ENCODE measurements at regions of chr17 and their contacts with region 1.

Region 1: GRCh38 chr17:39813631-39814030 is 50.5 kb downstream of the IKZF3 start:
- DNase-seq: peak; percentile 64
- H3K4me3 Mint-ChIP-seq: no peak overlapping the region
- H3K27ac Mint-ChIP-seq: no peak overlapping the region
- H3K4me1 Mint-ChIP-seq: peaks cover 19% of the 10 kb centered on the region
- H3K27me3 Mint-ChIP-seq: no peaks in the 10 kb centered on the region
- CTCF ChIP-seq: no peak

Region 2: DNA sequence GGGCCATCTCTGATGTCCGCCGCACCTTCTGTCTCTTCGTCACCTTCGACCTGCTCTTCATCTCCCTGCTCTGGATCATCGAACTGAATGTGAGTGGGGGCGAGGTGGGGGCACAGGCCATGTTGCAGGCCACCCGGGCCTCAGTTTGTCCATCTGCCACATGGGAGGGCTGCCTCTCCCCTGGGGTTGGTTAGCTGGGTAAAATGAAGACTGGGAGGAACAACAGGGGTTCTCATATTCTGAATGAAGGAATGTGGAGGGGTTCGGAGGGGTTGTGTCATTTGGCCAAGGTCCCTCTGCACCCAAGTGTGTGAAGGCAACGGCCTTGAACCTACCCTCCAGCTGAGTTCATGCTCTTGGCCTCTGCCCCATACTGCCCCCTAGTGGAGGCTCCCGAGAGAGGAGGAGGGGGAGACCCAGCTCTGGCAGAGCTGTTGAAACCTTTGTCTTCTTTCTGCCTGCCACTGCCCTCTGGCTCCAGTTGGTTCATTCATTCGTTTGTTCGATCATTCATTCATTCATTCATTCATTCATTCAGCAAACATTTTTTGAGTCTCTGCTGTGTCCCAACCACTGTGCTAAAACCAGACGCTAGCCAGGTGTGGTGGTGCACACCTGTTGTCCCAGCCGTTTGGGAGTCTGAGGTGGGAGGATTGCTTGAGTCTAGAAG is 159.8 kb before region 1 on chr17:
- CTCF ChIA-PET with region 1: interaction called, 123 read pairs
- intact Hi-C with region 1: no loop called
- DNase-seq: peak; percentile 100
- H3K4me3 Mint-ChIP-seq: no peak overlapping the region
- H3K27ac Mint-ChIP-seq: no peak overlapping the region
- H3K4me1 Mint-ChIP-seq: peaks cover 23% of the 10 kb centered on the region
- H3K27me3 Mint-ChIP-seq: no peaks in the 10 kb centered on the region
- CTCF ChIP-seq: no peak

Region 3: DNA sequence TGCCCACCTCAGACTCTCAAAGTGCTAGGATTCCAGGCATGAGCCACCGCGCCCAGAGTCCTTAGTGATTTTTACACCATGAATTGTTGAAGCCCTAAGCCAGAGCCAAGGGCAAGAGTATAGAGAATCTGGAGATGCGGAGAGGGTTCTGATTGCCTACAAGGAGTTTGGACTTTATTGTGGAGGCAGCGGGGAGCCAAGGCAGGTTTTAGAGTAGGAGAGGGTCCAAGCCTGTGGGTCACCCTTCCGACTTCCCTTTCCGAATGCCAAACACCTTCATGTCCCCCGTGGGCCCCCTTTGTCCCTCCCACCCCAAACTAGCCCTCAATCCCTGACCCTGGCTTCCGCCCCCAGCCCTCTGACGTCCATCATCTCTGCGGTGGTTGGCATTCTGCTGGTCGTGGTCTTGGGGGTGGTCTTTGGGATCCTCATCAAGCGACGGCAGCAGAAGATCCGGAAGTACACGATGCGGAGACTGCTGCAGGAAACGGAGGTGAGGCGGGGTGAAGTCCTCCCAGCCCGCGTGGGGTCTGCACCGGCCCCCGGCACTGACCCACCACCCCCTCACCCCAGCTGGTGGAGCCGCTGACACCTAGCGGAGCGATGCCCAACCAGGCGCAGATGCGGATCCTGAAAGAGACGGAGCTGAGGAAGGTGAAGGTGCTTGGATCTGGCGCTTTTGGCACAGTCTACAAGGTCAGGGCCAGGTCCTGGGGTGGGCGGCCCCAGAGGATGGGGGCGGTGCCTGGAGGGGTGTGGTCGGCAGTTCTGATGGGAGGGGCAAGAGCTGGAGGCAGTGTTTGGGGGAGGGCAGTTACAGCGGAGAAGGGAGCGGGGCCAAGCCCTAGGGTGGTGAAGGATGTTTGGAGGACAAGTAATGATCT is 90.4 kb before region 1 on chr17:
- CTCF ChIA-PET with region 1: interaction called, 1,211 read pairs
- intact Hi-C with region 1: no loop called
- DNase-seq: peak; percentile 75
- H3K4me3 Mint-ChIP-seq: peak overlapping the region; percentile 0
- H3K27ac Mint-ChIP-seq: peak overlapping the region; percentile 28
- H3K4me1 Mint-ChIP-seq: peaks cover 38% of the 10 kb centered on the region
- H3K27me3 Mint-ChIP-seq: no peaks in the 10 kb centered on the region
- CTCF ChIP-seq: no peak

Region 4: DNA sequence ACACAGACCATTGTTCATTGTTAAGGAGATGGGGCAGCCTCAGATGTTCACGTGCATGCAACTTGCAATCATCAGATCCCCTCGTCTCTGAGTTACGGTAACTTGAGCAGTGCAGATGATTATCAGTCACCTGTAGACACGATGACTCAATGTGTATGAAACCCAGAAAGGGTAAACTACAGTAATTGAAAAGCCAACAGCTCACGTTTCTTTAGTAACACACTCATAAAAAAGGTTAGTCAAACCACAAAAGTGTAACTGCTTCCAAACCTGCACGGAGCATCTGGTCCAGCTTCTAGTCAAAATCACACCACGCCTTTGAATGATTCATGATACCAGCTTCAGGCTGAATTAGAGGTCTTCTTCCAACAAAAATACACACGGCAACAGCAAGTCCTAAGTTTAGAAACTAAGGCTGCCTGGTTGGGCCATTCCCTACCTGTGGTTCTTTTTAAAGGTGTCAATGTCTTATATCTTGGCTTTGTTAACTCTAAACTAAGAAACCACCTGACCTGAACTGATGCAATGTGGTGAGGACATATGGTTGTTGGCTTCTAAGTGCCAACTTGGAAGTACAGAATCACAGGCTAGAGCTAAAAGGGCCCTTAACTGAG is 43.5 kb before region 1 on chr17:
- CTCF ChIA-PET with region 1: interaction called, 1,211 read pairs
- intact Hi-C with region 1: loop called (anchors 1 kb)
- DNase-seq: peak; percentile 100
- H3K4me3 Mint-ChIP-seq: peak overlapping the region; percentile 10
- H3K27ac Mint-ChIP-seq: peak overlapping the region; percentile 60
- H3K4me1 Mint-ChIP-seq: peaks cover 72% of the 10 kb centered on the region
- H3K27me3 Mint-ChIP-seq: peaks cover 13% of the 10 kb centered on the region
- CTCF ChIP-seq: no peak

Region 5: DNA sequence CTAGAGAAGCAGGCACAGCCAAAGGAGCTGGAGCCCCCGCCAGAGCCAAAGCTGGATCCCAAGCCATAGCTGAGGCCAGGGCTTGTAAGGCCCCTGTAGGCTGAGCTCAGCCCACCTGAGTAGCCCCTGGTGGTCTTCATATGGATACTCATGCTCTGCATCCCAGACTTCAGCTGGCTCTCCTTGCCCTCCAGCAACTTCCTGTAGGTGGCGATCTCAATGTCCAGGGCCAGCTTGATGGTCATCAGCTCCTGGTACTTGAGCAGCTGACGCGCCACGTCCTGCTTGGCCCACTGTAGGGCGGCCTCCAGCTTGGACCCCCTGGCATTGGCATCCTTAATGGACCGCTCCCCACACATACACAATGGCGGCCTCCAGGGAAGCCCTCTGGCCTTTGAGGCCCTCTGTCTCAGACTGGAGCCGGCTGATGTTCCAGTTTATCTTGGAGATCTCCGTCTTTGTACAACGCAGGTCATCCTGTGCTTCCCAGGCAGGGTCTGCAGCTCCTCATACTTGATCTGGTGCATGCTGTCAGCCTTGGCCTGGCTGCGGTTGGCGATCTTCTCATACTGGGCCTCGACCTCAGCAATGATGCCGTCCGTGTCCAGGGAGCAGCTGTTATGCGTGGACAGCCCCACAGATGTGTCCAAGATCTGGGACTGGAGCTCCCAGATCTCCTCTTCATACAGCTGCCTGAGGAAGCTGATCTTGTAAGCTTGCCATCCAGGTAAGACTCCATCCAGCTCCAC is 21.6 kb after region 1 on chr17:
- CTCF ChIA-PET with region 1: interaction called, 1,210 read pairs
- intact Hi-C with region 1: no loop called
- DNase-seq: peak; percentile 79
- H3K4me3 Mint-ChIP-seq: no peak overlapping the region
- H3K27ac Mint-ChIP-seq: no peak overlapping the region
- H3K4me1 Mint-ChIP-seq: no peaks in the 10 kb centered on the region
- H3K27me3 Mint-ChIP-seq: no peaks in the 10 kb centered on the region
- CTCF ChIP-seq: no peak

Region 6: GRCh38 chr17:39927101-39927928 is 113.7 kb after region 1 on chr17 and contains the starts of genes LRRC3C and ORMDL3:
- CTCF ChIA-PET with region 1: interaction called, 39 read pairs
- intact Hi-C with region 1: loop called (anchors 1 kb)
- DNase-seq: no peak
- H3K4me3 Mint-ChIP-seq: peak within 1 kb of the TSS; percentile 74
- H3K27ac Mint-ChIP-seq: peak within 1 kb of the TSS; percentile 66
- H3K4me1 Mint-ChIP-seq: peaks cover 60% of the 10 kb centered on the region
- H3K27me3 Mint-ChIP-seq: no peaks in the 10 kb centered on the region
- CTCF ChIP-seq: no peak
- total RNA-seq, gene LRRC3C: not detected in 2 replicates
- total RNA-seq, gene ORMDL3: 1,738 and 1,968 TPM in 2 replicates

Region 7: GRCh38 chr17:40317880-40318829 is 504.5 kb after region 1 on chr17:
- CTCF ChIA-PET with region 1: interaction called, 11 read pairs
- intact Hi-C with region 1: no loop called
- DNase-seq: peak; percentile 100
- H3K4me3 Mint-ChIP-seq: peak overlapping the region; percentile 89
- H3K27ac Mint-ChIP-seq: peak overlapping the region; percentile 71
- H3K4me1 Mint-ChIP-seq: peaks cover 45% of the 10 kb centered on the region
- H3K27me3 Mint-ChIP-seq: no peaks in the 10 kb centered on the region
- CTCF ChIP-seq: no peak